ENCODE measurements at regions of chr1 and their contacts with region 1.

Region 1: GRCh38 chr1:156146020-156146768 is 7.2 kb upstream of the SEMA4A start:
- ATAC-seq: peak; percentile 28 to 78 (median 42)
- H3K4me3 ChIP-seq: no peak overlapping the region
- H3K27ac ChIP-seq: no peak overlapping the region
- H3K4me1 ChIP-seq: peaks cover 35 to 40% of the 10 kb centered on the region in 2 donors

Region 2: GRCh38 chr1:156212833-156213643 is 66.8 kb after region 1 on chr1 and contains the start of gene PMF1:
- in situ Hi-C with region 1: loop called in 1 of 9 experiments (anchors 10 kb)
- ATAC-seq: peak; percentile 93 to 96 (median 95)
- H3K4me3 ChIP-seq: peak within 1 kb of the TSS; percentile 58 to 82 (median 67)
- H3K27ac ChIP-seq: peak within 1 kb of the TSS; percentile 98 to 99
- H3K4me1 ChIP-seq: peaks cover 12% of the 10 kb centered on the region in 2 donors
- total RNA-seq, gene PMF1: 19.8 to 131 (median 46.3) TPM

Region 3: DNA sequence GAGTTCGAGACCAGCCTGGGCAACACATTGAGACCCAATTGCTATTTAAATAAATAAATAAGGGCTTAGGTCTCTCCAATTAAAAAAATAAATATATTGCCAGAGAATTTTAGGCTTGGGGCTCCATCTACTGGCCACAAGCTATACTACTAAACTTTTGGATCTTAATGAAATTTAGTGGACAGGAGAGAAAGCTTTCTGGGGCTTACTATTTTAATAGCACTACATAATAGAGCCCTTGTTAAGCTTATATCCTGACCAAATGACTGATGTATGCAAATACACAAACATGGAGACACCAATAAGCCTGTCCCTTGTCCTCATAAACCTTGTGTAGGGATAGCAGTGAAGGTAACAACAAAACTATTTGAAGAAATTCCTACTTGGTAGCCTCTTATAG is 173.5 kb after region 1 on chr1:
- in situ Hi-C with region 1: no loop called
- ATAC-seq: peak in 1 of 8 experiments; percentile 32
- H3K4me3 ChIP-seq: no peak overlapping the region
- H3K27ac ChIP-seq: no peak overlapping the region
- H3K4me1 ChIP-seq: no peaks in the 10 kb centered on the region

Region 4: DNA sequence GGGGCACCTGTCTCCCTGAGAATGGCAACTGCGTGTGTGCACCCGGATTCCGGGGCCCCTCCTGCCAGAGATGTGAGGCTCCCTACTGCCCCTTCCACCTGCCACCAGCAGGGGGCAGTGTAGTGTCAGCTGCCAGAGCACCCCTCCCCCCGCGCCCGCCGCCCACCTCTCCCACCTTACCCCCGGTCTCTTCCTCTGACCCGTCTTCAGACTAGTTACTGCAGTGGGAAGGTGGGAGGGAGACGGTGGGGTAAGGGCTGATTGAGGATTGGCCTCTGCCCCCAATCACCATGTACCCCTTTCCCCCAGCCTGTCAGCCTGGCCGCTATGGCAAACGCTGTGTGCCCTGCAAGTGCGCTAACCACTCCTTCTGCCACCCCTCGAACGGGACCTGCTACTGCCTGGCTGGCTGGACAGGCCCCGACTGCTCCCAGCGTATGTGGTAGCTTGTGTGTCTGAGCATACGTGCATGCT is 764.2 kb after region 1 on chr1:
- in situ Hi-C with region 1: no loop called
- ATAC-seq: peak in 6 of 8 experiments; percentile 12 to 75 (median 30)
- H3K4me3 ChIP-seq: no peak overlapping the region
- H3K27ac ChIP-seq: no peak overlapping the region
- H3K4me1 ChIP-seq: peaks cover 5 to 14% of the 10 kb centered on the region in 2 donors

Measured in motor neuron (in vitro differentiated cells).